ENCODE measurements at regions of chr12 and their contacts with region 1.

Region 1: GRCh38 chr12:120677765-120678473 is 9.0 kb upstream of the MLEC start:
- DNase-seq: no peak
- H3K4me3 ChIP-seq: no peak overlapping the region
- H3K27ac ChIP-seq: no peak overlapping the region
- H3K4me1 ChIP-seq: peaks cover 10% of the 10 kb centered on the region; the same call in 1 of the 2 replicates
- H3K27me3 ChIP-seq: no peaks in the 10 kb centered on the region
- CTCF ChIP-seq: no peak

Region 2: DNA sequence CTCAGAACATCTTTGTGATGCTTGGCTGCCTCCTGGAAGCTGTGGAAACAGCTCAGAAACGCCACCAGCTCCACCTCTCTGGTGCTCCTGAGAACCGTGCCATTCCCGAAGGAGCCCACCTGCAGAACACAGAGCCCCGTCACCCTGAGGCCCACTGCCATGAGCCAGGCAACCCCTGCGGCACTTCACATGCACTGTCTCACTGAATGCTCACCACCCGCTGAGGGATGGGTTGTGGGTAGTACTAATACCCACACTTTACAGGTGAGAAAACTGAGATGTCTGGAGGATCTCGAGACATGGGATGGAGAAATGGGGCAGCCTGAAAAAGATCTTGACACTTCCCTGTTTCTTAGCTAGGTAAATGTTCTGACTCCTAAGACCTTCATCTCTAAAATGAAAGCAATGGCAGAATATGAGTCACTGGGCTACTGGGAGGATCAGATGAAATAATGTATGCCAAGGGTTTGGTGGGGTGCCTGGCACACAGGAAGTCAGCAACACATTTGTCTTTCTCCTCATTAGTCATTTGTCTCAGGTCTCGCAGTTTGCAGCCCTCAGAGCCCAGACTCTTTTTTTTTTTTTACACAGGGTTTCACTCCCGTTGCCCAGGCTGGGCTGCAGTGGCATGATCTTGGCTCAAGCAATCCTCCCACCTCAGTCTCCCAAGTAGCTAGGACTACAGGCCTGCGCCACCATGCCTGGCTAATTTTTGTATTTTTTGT is 355.9 kb after region 1 on chr12:
- CTCF ChIA-PET with region 1: no interaction called
- POLR2A ChIA-PET with region 1: no interaction called
- intact Hi-C with region 1: loop called (anchors 5 kb)
- DNase-seq: peak; percentile 61 to 91
- H3K4me3 ChIP-seq: no peak overlapping the region
- H3K27ac ChIP-seq: peak overlapping the region; percentile 80
- H3K4me1 ChIP-seq: peaks cover 38% of the 10 kb centered on the region
- H3K27me3 ChIP-seq: no peaks in the 10 kb centered on the region
- CTCF ChIP-seq: no peak